ENCODE measurements at regions of chr4 and their contacts with region 1.

Region 1: DNA sequence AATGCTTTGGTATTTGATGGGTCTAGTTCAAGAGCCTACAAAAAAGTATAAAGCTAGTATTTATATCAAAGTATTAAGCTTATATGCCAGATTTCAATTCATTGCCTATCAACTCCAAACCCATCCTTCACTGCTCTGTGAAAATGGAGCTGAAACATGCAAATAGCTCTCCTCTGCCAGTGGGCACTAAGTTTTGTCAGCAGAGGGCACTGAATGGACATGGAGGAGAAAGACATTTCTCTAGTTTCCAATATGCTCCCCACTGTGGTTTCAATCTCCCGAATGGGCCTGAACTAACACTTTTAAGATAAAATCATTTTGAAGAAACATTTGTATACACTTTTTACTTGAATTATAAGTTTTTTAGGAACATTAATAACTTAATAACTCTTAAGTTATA is 12.4 kb downstream of the PPID start:
- DNase-seq: no peak
- H3K4me3 ChIP-seq: no peak overlapping the region
- H3K27ac ChIP-seq: no peak overlapping the region
- H3K4me1 ChIP-seq: no peaks in the 10 kb centered on the region
- H3K27me3 ChIP-seq: no peaks in the 10 kb centered on the region
- CTCF ChIP-seq: no peak; the same call in 1 of the 2 replicates

Region 2: DNA sequence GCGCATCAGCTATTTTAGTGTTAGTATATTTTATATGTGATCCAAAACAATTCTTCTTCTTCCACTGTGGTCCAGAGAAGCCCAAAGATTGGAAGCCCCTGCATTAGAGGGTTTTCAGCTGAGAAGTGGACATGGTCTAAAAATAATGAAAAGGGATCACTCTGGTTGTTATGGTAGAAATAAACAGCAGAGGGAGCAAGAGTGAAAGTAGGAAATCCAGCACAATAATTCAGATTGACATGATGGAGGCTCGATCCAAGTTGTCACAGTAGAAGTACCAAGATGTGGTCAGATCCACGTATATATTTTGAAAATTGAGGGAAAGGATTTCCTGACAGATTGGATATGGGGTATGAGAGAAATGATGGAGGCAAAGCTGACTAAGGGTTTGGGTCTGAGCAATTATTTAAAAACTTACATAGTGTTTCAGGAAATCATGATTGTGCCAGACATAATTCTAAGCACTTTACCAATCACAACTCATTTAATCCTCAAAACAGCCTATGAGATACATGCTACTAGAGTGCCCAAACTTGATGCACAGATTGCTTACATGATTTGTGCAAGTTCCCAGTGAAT is 517.6 kb before region 1 on chr4:
- CTCF ChIA-PET with region 1: no interaction called
- POLR2A ChIA-PET with region 1: no interaction called
- intact Hi-C with region 1: no loop called
- DNase-seq: no peak
- H3K4me3 ChIP-seq: no peak overlapping the region
- H3K27ac ChIP-seq: no peak overlapping the region
- H3K4me1 ChIP-seq: no peaks in the 10 kb centered on the region
- H3K27me3 ChIP-seq: no peaks in the 10 kb centered on the region
- CTCF ChIP-seq: peak; percentile 66

Region 3: GRCh38 chr4:158787709-158788475 is 77.1 kb after region 1 on chr4:
- CTCF ChIA-PET with region 1: no interaction called
- POLR2A ChIA-PET with region 1: interaction called, 25 read pairs
- intact Hi-C with region 1: no loop called
- DNase-seq: no peak
- H3K4me3 ChIP-seq: no peak overlapping the region
- H3K27ac ChIP-seq: no peak overlapping the region
- H3K4me1 ChIP-seq: no peaks in the 10 kb centered on the region
- H3K27me3 ChIP-seq: no peaks in the 10 kb centered on the region
- CTCF ChIP-seq: no peak

Region 4: DNA sequence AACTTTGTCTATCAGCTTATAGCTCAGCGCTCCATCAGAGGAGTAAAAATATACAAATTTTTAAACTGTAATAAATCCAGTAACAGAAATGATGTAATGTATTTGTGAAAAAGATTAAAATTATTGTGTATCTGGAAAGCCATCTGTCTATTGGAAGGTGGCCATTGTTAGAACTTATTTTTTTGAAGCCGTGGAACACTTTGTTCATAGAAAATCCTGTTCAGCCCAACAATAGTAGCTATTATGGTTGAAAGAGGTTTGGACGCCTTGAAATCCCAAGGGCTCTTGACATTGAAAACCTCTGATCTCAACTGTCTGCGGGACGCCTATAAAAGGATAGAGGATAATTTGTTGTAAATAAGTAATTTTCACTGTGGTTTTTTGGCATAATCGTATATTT is 490.4 kb after region 1 on chr4:
- CTCF ChIA-PET with region 1: no interaction called
- POLR2A ChIA-PET with region 1: no interaction called
- intact Hi-C with region 1: loop called (anchors 5 kb)
- DNase-seq: no peak
- H3K4me3 ChIP-seq: no peak overlapping the region
- H3K27ac ChIP-seq: no peak overlapping the region
- H3K4me1 ChIP-seq: no peaks in the 10 kb centered on the region
- H3K27me3 ChIP-seq: no peaks in the 10 kb centered on the region
- CTCF ChIP-seq: no peak

Measured in PC-9 (cell line).